Posterior vena cava (tissue), 2 donors: ENCODE measurements at regions of chr19 and their contacts with region 1.

Region 1: DNA sequence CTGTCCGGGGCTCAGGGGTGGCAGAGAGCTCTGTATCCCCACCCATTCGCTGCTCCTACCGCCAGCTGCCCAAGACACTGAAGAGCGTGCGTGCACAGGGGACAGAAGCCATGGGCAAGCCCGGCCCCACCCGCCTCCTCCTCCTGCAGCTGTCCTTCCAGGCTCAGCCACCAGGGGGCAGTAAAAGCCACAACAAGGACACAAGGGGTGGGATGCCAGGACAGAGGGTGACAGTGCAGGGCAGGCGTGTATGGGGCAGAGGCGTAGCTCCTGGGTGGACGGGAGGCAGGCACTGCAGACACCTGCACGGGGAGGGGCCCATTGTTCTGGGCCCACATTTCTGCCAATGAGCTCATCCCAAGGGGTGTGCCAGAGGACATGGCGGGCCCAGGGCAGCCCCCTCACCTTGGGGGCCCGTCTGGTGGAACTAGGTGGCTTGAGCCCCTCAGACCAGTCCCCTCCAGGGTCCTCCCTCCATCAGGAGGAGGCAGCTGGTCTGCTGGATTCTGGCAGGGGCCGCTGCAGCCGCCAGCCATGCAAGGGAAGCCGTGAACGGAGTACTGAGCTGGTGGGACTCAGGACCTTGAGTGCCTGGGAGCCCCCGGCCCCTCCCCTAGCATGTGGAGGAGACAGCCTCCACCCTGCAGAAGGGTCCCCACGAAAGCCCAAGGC is 61.1 kb downstream of the MLLT1 start:
- DNase-seq: peak; percentile 97

Region 2: GRCh38 chr19:6279931-6280591 is 61.4 kb after region 1 on chr19 and contains the start of gene MLLT1:
- intact Hi-C with region 1: loop called in 1 of 2 experiments (anchors 5 kb)
- DNase-seq: peak; percentile 99
- total RNA-seq, gene MLLT1: 49.2 to 52.0 TPM

Region 3: GRCh38 chr19:6297202-6297601 is 78.6 kb after region 1 on chr19:
- intact Hi-C with region 1: loop called (anchors 2 to 5 kb)
- DNase-seq: peak; percentile 1

Region 4: DNA sequence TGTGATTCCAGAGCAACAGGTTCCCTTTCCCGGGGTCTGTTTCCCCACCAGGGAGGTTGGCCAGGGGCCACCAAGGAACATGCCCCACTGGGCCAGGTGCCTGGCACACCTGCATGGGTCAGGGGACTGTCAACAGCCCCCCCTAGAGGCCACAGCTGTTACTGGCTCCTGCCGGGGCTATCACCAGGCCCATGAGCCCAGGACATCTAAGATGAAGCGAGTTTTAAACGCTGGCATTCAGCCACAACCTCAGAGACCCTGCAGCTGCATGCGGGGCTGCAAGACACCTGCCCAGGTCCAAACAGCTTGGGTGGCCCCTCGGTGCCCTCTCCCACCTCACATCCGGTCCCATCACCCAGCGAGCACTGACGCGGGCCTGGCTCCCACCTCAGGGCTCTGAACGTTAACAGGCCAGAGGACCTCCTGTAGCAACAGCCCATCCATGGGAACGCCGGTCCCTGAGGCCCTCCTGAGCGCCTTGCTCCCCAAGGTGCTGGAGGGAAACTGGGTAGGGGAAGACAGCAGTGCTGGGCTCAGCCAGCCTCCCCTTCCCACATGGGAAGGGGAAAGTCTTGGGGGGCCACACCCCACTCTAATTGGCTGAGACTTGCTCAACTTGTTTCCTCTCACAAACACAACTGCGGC is 193.9 kb after region 1 on chr19:
- intact Hi-C with region 1: loop called in 1 of 2 experiments (anchors 10 kb)
- DNase-seq: no peak